ENCODE measurements at regions of chr5 and their contacts with region 1.

Region 1: GRCh38 chr5:169442403-169442874 is 141.1 kb upstream of the SPDL1 start:
- DNase-seq: no peak
- ATAC-seq: peak; percentile 62
- H3K4me3 ChIP-seq: no peak overlapping the region
- H3K27ac ChIP-seq: no peak overlapping the region
- H3K4me1 ChIP-seq: no peaks in the 10 kb centered on the region
- H3K27me3 ChIP-seq: no peaks in the 10 kb centered on the region

Region 2: DNA sequence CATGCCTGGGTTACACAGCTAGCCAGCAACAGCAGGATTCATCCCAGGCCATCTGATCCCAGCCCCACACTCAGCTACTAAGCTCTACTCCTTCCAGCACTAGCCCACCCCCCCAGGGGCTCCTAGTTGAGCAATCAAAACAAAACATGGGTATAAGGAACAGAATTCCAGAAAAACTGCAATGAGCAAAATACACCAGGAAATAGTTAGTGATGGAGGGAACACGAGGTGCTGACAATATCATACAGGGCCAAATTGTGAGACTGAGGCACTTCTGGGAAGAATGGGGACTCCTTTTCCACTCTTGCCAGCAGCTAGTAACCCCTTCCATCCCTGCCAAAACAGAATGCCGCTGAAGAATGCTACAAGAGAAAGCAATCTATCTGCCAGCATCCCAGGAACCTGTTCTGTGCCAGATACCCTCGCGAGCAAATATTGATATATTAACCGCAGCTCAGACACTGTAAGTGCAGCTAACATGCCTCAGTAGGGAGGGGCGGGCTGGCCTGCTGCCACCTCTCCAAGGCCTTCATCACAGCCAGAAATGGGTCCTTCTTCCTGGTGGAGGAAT is 302.9 kb before region 1 on chr5:
- intact Hi-C with region 1: no loop called
- DNase-seq: peak in 1 of 2 donors; percentile 57
- ATAC-seq: peak; percentile 45
- H3K4me3 ChIP-seq: no peak overlapping the region
- H3K27ac ChIP-seq: no peak overlapping the region
- H3K4me1 ChIP-seq: no peaks in the 10 kb centered on the region
- H3K27me3 ChIP-seq: no peaks in the 10 kb centered on the region

Region 3: GRCh38 chr5:169173372-169173771 is 269.1 kb before region 1 on chr5:
- intact Hi-C with region 1: no loop called
- DNase-seq: no peak
- ATAC-seq: no peak
- H3K4me3 ChIP-seq: no peak overlapping the region
- H3K27ac ChIP-seq: no peak overlapping the region
- H3K4me1 ChIP-seq: peaks cover 2 to 4% of the 10 kb centered on the region in 2 donors
- H3K27me3 ChIP-seq: no peaks in the 10 kb centered on the region

Region 4: DNA sequence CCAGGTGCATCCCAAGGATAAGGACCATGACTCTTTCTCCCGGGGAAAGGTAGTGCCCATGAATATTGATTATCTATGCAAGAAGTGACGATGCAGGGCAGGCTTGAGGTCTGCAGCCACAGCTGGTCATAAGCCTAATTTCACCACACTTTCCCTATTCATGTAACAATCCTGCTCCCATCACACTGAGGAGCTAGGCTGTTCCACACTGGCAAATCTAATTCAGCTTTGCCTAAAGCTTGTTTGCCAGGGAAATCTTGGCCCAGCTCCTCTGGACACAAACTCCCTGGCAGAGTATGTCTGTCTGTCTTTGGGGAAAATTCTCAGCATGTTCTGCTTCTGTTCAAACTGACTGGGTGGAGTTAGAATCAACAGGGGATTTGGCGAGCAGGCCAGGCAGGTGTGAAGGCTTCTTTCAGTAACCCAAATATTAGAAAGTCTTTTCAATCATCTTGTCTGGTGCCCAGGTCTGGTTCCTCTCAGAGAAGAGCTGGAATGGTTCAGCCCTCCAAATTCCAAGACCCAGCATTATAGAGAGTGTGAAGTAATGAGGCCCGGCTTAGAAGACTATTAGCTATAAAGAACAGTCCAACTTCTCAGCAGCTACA is 52.6 kb after region 1 on chr5:
- intact Hi-C with region 1: loop called in 1 of 2 experiments (anchors 5 kb)
- DNase-seq: no peak
- ATAC-seq: no peak
- H3K4me3 ChIP-seq: no peak overlapping the region
- H3K27ac ChIP-seq: no peak overlapping the region
- H3K4me1 ChIP-seq: no peaks in the 10 kb centered on the region
- H3K27me3 ChIP-seq: no peaks in the 10 kb centered on the region